Ovary (tissue), 10 donors: ENCODE measurements at regions of chr5 and their contacts with region 1.

Region 1: DNA sequence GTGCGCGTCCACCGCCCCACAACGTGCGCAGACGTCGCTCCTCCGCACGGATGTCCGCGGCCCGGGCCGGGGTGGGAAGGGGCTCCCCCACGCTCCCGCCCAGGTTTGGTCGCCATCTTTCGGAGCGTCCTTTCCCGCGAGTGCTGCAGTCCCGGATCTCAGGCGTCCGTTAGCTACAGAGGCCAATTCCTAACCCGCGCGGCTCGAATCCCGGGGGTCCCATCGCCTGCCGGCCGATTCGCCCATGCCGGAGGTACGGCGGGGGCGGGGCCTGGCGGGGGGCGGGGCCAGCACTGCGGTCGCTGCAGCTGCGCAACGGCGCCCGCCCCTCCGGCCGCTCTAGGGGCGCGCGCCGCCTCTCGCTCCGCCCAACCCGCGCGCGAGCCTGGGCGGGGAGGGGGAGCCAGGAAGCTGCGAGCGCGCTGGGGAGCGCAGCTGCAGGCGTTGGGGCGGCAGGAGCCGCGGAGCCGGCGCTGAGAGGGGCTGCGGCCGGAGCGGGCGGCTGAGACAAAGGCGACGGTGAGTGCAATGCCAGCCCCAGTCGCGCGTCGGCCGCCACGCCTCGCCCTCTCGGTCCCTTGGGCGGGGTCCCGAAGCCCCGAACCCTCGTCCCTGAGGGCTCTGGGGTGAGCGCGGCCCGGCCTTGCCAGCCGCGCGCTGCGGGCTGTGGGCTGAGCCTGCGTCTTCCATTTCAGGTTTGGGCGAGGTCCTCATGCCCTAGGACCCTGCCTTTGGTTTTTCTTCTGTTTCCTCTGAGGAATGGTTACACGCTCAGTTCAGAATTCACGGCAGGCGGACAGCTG is at the start of gene CDC42SE2:
- DNase-seq: peak; percentile 84 to 91 (median 88)
- H3K4me3 ChIP-seq: peak within 1 kb of the TSS; percentile 73
- H3K27ac ChIP-seq: peak within 1 kb of the TSS; percentile 69 to 88
- H3K4me1 ChIP-seq: peaks cover 4% of the 10 kb centered on the region
- H3K27me3 ChIP-seq: no peaks in the 10 kb centered on the region
- CTCF ChIP-seq: peak in 1 of 3 donors; percentile 16
- EP300 ChIP-seq: no peak
- POLR2A ChIP-seq: peak; percentile 85
- total RNA-seq, gene CDC42SE2: 18.0 to 37.6 (median 23.7) TPM

Region 2: DNA sequence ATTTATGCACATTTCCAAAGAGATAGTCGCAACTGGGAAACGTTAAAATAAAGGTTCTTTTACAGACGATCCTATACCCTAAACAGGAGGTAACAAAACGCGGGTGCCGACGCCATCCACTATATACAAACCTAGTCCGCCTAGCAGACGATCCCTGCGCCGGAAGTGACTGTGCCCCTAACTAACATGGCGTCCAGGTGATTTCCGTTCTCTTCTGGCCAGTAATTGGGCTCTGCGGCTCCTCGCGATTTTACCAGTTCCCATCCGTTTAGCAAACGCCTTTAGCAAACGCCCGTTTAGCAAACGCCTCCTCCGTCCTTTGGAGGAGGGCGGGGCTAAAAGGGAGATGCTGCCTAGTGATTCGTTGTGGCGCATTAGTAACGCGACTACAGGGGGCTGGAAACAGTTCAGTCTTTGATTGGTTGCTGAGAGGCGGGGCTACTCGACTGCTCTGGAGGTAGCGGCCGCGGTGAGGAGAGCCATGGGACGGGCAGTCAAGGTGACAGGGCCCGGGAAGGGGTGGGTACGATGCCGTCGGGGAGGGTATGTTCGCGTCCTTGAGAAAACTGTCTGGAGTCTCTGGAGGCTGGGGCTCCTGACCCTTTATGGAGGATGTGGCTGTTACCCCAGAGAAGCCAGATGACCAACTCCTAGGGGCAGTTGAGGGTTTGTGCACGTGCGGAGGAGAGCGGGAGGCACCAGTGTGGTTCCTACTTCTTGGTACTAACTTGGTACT is 93.1 kb before region 1 on chr5 and contains the start of gene LYRM7:
- intact Hi-C with region 1: loop called in 3 of 4 experiments (anchors 10 kb)
- DNase-seq: peak; percentile 92 to 96 (median 93)
- H3K4me3 ChIP-seq: peak within 1 kb of the TSS; percentile 60
- H3K27ac ChIP-seq: peak within 1 kb of the TSS; percentile 43 to 61
- H3K4me1 ChIP-seq: peaks cover 4% of the 10 kb centered on the region
- H3K27me3 ChIP-seq: no peaks in the 10 kb centered on the region
- CTCF ChIP-seq: peak in 1 of 3 donors; percentile 35
- EP300 ChIP-seq: no peak
- POLR2A ChIP-seq: peak; percentile 41
- total RNA-seq, gene LYRM7: 3.9 to 17.9 (median 9.8) TPM

Region 3: GRCh38 chr5:131394128-131394527 is 130.3 kb after region 1 on chr5:
- intact Hi-C with region 1: no loop called
- DNase-seq: no peak
- H3K4me3 ChIP-seq: no peak overlapping the region
- H3K27ac ChIP-seq: no peak overlapping the region
- H3K4me1 ChIP-seq: peaks cover 3% of the 10 kb centered on the region
- H3K27me3 ChIP-seq: no peaks in the 10 kb centered on the region
- CTCF ChIP-seq: no peak
- EP300 ChIP-seq: no peak
- POLR2A ChIP-seq: no peak